Breast epithelium (tissue), 4 donors: ENCODE measurements at regions of chr14 and their contacts with region 1.

Region 1: GRCh38 chr14:105294142-105294597 is 6.6 kb downstream of the BRF1 start:
- DNase-seq: no peak
- H3K4me3 ChIP-seq: peak overlapping the region in 1 of 3 donors; percentile 33
- H3K27ac ChIP-seq: peak overlapping the region in 1 of 2 donors; percentile 61
- H3K4me1 ChIP-seq: peaks cover under 1 to 10% of the 10 kb centered on the region in 2 donors
- H3K27me3 ChIP-seq: no peaks in the 10 kb centered on the region
- CTCF ChIP-seq: no peak
- POLR2A ChIP-seq: no peak

Region 2: GRCh38 chr14:103855063-103855733 is 1439.0 kb before region 1 on chr14:
- intact Hi-C with region 1: loop called (anchors 10 kb)
- DNase-seq: peak; percentile 77 to 78
- H3K4me3 ChIP-seq: peak overlapping the region in 1 of 3 donors; percentile 0
- H3K27ac ChIP-seq: peak overlapping the region; percentile 84 to 91
- H3K4me1 ChIP-seq: peaks cover 6 to 9% of the 10 kb centered on the region in 2 donors
- H3K27me3 ChIP-seq: no peaks in the 10 kb centered on the region
- CTCF ChIP-seq: no peak
- POLR2A ChIP-seq: no peak